ENCODE measurements at regions of chr3 and their contacts with region 1.

Region 1: GRCh38 chr3:38164966-38165680 is at the start of gene OXSR1:
- DNase-seq: peak; percentile 92 to 98
- H3K4me3 ChIP-seq: peak within 1 kb of the TSS; percentile 75 to 90 (median 86)
- H3K27ac ChIP-seq: peak within 1 kb of the TSS; percentile 99
- H3K4me1 ChIP-seq: peaks cover 0 to 2% (median 0%) of the 10 kb centered on the region in 4 experiments; a peak in 3 of 7 replicates
- H3K27me3 ChIP-seq: no peaks in the 10 kb centered on the region
- CTCF ChIP-seq: no peak
- EP300 ChIP-seq: no peak
- POLR2A ChIP-seq: peak; percentile 77
- RAD21 ChIP-seq: no peak
- total RNA-seq, gene OXSR1: 45.5 and 47.0 TPM in 2 replicates

Region 2: DNA sequence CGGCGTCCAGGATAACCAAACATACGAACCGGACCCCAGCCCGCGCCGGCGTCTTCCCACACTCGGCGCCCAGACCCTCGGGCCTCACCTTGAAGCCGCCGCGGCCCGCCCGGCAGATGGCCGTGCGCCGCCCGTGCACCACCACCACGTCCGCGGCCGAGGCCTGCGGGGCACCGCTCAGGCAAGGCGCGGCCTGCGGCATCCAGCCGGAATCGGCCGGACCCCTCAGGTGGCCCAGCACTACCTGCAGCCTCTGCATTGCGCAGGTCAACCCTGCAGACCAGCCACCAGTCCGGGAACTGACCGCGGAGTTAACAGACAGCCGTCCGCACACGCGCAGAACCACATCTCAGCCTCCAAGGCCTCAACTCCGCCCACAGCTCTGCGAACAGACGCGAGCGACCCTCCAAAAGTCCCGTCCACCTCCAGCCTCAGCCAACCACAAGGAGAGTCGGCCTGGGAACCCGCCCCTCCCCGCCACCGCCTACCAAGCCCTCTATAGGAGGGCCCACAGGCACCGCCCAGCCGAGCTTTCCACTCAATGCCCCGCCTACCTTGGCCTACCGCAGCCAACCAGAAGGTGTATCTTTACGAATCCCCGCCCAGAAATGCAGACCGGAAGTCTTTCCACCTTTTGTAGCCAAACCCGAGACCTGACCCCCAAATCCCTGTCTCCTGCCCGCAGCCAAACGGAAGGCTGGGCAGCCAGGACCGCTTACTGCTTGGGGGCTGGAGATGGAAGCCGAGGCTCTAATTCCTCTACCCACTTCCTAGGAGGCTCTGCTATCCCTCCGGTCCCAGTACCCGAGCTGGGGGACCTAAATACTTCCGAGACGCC is 28.1 kb before region 1 on chr3 and contains the start of gene ACAA1:
- CTCF ChIA-PET with region 1: interaction called, 6 read pairs
- POLR2A ChIA-PET with region 1: interaction called, 38 read pairs
- DNase-seq: peak; percentile 96 to 99
- H3K4me3 ChIP-seq: peak within 1 kb of the TSS; percentile 73 to 87 (median 84)
- H3K27ac ChIP-seq: peak within 1 kb of the TSS; percentile 36; the same call in 1 of the 2 replicates
- H3K4me1 ChIP-seq: peaks cover 7 to 16% (median 13%) of the 10 kb centered on the region in 4 experiments
- H3K27me3 ChIP-seq: no peaks in the 10 kb centered on the region
- CTCF ChIP-seq: no peak
- EP300 ChIP-seq: no peak
- POLR2A ChIP-seq: peak in 1 of 2 experiments; percentile 89; a peak in 2 of 3 replicates
- RAD21 ChIP-seq: 0 out of 4 replicates have a peak, but pooled peaks of 1 of the 2 experiments have one; percentile 1
- total RNA-seq, gene ACAA1: 31.9 and 34.8 TPM in 2 replicates

Measured in H1 (cell line).